ENCODE measurements at regions of chr5 and their contacts with region 1.

Region 1: DNA sequence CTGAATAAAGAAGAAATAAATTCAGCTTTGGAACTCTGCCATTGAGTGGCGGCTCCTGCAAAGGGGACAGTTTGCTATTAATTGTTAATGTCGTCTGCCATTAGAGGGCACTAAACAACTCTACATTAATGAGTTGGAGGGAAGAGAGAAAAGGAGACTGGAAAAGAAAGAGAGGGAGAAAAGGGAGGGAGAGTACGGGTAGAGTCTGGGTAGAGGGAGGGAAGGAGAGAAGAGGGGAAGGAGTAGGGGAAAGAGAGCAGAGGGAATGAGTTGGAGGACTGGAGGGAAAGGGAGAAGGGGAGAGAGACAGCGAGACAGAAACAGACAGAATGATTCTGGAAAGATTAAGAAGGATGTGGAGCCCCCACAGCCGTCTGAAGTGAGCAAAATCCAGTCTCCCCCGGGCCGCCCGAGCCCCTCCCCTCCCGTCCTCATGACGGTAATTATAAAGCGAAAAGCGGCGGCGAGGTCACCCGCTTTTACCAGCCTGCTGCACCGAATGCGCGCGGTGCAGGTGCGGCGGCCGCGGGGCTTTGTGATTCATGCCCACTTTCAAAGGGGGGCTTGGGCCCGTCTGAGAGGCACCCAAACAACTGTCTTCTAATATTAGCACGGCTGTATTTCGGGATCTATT is 1.9 kb upstream of the FST start:
- DNase-seq: peak; percentile 29
- CTCF ChIP-seq: peak; percentile 58

Region 2: GRCh38 chr5:53463909-53464621 is 14.5 kb before region 1 on chr5:
- CTCF ChIA-PET with region 1: interaction called, 24 read pairs
- POLR2A ChIA-PET with region 1: no interaction called
- DNase-seq: no peak
- CTCF ChIP-seq: no peak

Region 3: GRCh38 chr5:53503562-53504218 is 25.2 kb after region 1 on chr5:
- CTCF ChIA-PET with region 1: no interaction called
- POLR2A ChIA-PET with region 1: no interaction called
- DNase-seq: no peak
- CTCF ChIP-seq: no peak